ENCODE measurements at regions of chr6 and their contacts with region 1.

Region 1: DNA sequence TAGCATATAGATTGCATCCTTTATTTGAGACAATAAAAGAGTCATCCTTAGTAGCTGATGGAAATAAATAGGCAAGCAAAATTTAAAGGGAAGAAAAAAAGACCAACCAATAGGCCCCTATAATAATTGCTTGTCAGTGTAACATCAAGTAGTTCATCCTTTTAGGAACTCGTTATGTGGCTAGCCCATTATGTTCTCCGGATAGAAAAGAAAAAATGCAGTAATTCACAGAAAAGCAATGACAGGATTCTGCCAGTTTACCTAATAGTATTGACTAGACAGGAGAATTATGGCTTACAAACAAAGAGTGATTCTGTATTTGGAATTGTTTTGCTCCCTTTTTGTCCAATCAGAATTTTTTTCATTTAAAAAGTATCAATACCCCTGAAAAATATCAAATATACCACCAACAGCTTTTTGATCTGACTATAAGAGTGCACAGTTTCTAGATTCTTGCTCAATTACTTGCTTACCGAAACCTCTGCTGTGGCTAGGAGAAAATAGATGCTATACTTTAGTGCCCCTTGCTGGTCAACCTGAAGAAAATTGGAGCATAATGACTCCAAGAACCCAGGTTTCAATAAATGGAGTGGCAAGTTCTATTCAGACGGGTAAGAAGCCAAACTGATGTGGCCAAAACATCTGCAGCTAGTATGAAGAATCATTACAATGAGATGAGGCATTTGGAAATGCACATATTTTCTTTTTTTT is 91.5 kb upstream of the SASH1 start:
- DNase-seq: no peak
- H3K4me3 ChIP-seq: no peak overlapping the region
- H3K27ac ChIP-seq: no peak overlapping the region
- H3K4me1 ChIP-seq: no peaks in the 10 kb centered on the region
- H3K27me3 ChIP-seq: no peaks in the 10 kb centered on the region
- CTCF ChIP-seq: peak; percentile 32 to 44 (median 35)
- EP300 ChIP-seq: no peak
- POLR2A ChIP-seq: no peak

Region 2: DNA sequence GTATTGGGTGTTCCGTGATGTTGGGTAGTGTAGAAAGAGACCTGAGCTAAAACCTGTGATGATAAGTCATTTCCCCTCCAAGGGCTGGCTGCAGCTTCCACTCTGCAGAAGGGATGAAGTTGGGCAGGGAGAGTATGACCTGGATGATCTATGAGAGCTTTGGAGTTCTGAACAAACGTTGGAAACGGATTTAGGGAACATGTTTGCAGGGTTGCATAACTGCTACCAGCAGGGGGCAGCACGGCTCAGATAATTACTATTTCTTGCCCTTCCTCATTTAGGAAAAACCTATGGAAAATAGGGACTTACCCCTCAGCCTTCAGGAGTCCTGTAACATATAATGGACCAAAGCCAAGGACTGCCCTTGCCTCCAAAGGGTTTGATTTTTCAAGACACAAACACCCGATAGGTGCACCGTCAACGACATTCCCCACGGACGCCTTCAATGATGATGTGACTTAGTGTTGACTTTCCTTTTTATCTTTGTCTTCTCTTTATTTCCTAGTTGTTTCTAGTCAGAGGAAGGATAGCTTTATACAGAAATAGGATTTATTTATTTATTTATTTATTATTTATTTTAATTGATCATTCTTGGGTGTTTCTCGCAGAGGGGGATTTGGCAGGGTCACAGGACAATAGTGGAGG is 73.4 kb before region 1 on chr6:
- intact Hi-C with region 1: loop called (anchors 2 kb)
- DNase-seq: no peak
- H3K4me3 ChIP-seq: no peak overlapping the region
- H3K27ac ChIP-seq: no peak overlapping the region
- H3K4me1 ChIP-seq: no peaks in the 10 kb centered on the region
- H3K27me3 ChIP-seq: no peaks in the 10 kb centered on the region
- CTCF ChIP-seq: peak; percentile 72 to 86 (median 85)
- EP300 ChIP-seq: no peak
- POLR2A ChIP-seq: no peak